ENCODE measurements at regions of chr1 and their contacts with region 1.

Region 1: DNA sequence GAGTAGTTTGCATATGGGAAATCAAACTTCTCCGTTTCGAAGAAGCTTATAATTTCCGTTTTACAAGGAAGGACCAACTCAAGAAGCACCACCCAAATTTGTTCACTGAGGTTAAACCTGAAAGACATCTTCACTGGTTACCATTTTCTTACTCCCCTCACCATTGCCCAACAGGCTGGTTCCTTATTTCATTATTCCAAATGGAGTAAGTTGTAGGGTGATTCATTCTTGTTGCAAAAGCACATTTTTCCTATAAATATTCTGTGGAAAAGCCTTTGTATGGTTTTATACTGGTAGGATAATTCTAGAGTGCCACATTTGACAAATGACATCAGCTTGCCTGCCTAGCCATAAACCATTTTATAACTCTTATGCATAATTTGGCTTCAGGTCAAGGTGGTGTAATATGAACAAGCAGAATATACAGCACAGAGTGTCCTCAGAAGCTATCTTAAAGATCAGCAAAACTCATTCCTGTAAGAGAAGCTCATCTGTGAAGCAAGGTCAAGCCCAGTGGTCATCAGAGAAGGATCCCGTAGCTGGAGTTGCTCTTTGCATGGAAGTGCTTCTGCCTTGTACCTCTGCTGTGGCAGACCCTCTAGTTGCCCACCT is 24.1 kb upstream of the C1orf21 start:
- DNase-seq: peak; percentile 38
- ATAC-seq: peak; percentile 48; the same call in 1 of the 2 replicates
- H3K4me3 ChIP-seq: no peak overlapping the region
- H3K27ac ChIP-seq: no peak overlapping the region
- H3K4me1 ChIP-seq: peaks cover 2% of the 10 kb centered on the region; the same call in 1 of the 2 replicates
- H3K27me3 ChIP-seq: peaks cover 3% of the 10 kb centered on the region
- CTCF ChIP-seq: no peak
- POLR2A ChIP-seq: no peak
- RAD21 ChIP-seq: no peak

Region 2: DNA sequence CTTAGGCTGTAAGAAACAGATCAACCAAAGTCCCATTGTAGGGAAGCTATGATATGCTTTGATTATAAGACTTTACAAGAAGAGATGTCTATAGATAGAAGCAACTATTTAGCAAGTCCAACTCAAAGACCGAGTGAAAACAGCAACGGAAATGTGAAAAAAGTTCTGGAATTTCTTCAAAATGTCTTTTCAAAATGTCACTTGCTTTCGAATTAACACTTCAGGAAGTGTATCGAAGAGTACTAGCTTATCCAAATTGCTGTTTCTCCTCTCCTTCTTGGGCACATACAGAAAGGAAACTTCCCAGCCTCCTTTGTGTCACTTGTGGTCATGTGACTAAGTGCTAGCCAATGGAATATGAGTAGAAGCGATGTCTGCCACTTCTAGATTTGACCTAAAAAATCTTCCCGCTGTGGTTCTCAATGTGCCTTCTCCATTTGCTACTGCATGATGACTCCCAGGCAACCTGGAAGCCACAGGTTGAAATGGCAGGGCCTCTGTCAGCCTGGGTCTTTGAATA is 221.4 kb before region 1 on chr1:
- CTCF ChIA-PET with region 1: no interaction called
- POLR2A ChIA-PET with region 1: no interaction called
- dilution Hi-C with region 1: no loop called
- in situ Hi-C with region 1: no loop called
- intact Hi-C with region 1: no loop called
- DNase-seq: no peak
- ATAC-seq: no peak
- H3K4me3 ChIP-seq: no peak overlapping the region
- H3K27ac ChIP-seq: no peak overlapping the region
- H3K4me1 ChIP-seq: no peaks in the 10 kb centered on the region
- H3K27me3 ChIP-seq: peaks cover 6% of the 10 kb centered on the region
- CTCF ChIP-seq: no peak
- POLR2A ChIP-seq: no peak
- RAD21 ChIP-seq: no peak

Region 3: DNA sequence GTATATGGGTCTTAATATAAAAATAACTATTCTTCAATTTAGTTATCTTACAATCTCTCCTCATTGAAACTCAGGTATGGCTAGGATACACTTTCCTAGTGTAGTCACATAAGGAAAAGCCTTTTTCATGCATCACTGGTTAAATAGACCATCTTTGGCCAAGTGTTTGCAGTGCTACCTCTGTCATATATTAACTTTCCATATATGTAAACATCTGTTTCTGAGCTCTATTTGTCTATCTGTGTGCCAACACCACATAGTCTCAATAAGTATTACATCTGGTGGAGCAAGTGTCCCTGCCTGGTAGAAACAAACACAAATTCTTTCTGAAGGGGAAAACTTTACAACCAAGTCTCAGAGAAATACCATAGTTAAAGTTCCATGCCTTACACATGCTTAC is 176.6 kb before region 1 on chr1:
- CTCF ChIA-PET with region 1: no interaction called
- POLR2A ChIA-PET with region 1: no interaction called
- dilution Hi-C with region 1: no loop called
- in situ Hi-C with region 1: no loop called
- intact Hi-C with region 1: no loop called
- DNase-seq: no peak
- ATAC-seq: no peak
- H3K4me3 ChIP-seq: no peak overlapping the region
- H3K27ac ChIP-seq: no peak overlapping the region
- H3K4me1 ChIP-seq: peaks cover 2% of the 10 kb centered on the region
- H3K27me3 ChIP-seq: peaks cover 6% of the 10 kb centered on the region; the same call in 1 of the 2 replicates
- CTCF ChIP-seq: no peak
- POLR2A ChIP-seq: no peak
- RAD21 ChIP-seq: no peak

Region 4: GRCh38 chr1:184315254-184315653 is 47.5 kb before region 1 on chr1:
- CTCF ChIA-PET with region 1: no interaction called
- POLR2A ChIA-PET with region 1: no interaction called
- dilution Hi-C with region 1: no loop called
- in situ Hi-C with region 1: loop called (anchors 5 kb)
- intact Hi-C with region 1: no loop called
- DNase-seq: peak; percentile 29
- ATAC-seq: peak; percentile 42
- H3K4me3 ChIP-seq: no peak overlapping the region
- H3K27ac ChIP-seq: no peak overlapping the region
- H3K4me1 ChIP-seq: no peaks in the 10 kb centered on the region; the same call in 1 of the 2 replicates
- H3K27me3 ChIP-seq: no peaks in the 10 kb centered on the region
- CTCF ChIP-seq: no peak
- POLR2A ChIP-seq: no peak
- RAD21 ChIP-seq: no peak